ENCODE measurements at regions of chr10 and their contacts with region 1.

Region 1: GRCh38 chr10:36899651-36900050 is 225.7 kb upstream of the ANKRD30A start:
- DNase-seq: no peak
- H3K4me3 ChIP-seq: no peak overlapping the region
- H3K27ac ChIP-seq: no peak overlapping the region
- H3K4me1 ChIP-seq: no peaks in the 10 kb centered on the region
- H3K27me3 ChIP-seq: no peaks in the 10 kb centered on the region
- CTCF ChIP-seq: no peak
- EP300 ChIP-seq: no peak
- POLR2A ChIP-seq: no peak

Region 2: GRCh38 chr10:37057261-37057660 is 157.6 kb after region 1 on chr10:
- intact Hi-C with region 1: no loop called
- DNase-seq: no peak
- H3K4me3 ChIP-seq: no peak overlapping the region
- H3K27ac ChIP-seq: no peak overlapping the region
- H3K4me1 ChIP-seq: no peaks in the 10 kb centered on the region
- H3K27me3 ChIP-seq: no peaks in the 10 kb centered on the region
- CTCF ChIP-seq: no peak
- EP300 ChIP-seq: no peak
- POLR2A ChIP-seq: no peak

Region 3: GRCh38 chr10:37263341-37263740 is 363.7 kb after region 1 on chr10:
- intact Hi-C with region 1: loop called (anchors 5 kb)
- DNase-seq: no peak
- H3K4me3 ChIP-seq: no peak overlapping the region
- H3K27ac ChIP-seq: no peak overlapping the region
- H3K4me1 ChIP-seq: no peaks in the 10 kb centered on the region
- H3K27me3 ChIP-seq: no peaks in the 10 kb centered on the region
- CTCF ChIP-seq: peak in 1 of 4 experiments; percentile 41
- EP300 ChIP-seq: no peak
- POLR2A ChIP-seq: no peak

Measured in sigmoid colon (tissue), 7 donors.